Prostate gland (tissue), 2 donors: ENCODE measurements at regions of chr14 and their contacts with region 1.

Region 1: GRCh38 chr14:102316743-102317563 is 2.6 kb upstream of the ZNF839 start:
- DNase-seq: peak; percentile 93
- H3K4me3 ChIP-seq: peak overlapping the region; percentile 33 to 43
- H3K27ac ChIP-seq: peak overlapping the region; percentile 73 to 82
- H3K4me1 ChIP-seq: peaks cover 7% of the 10 kb centered on the region
- H3K27me3 ChIP-seq: no peaks in the 10 kb centered on the region
- CTCF ChIP-seq: peak; percentile 71 to 99 (median 91)
- POLR2A ChIP-seq: peak; percentile 15

Region 2: GRCh38 chr14:101964297-101965144 is 352.4 kb before region 1 on chr14 and contains the start of gene DYNC1H1:
- intact Hi-C with region 1: loop called (anchors 10 kb)
- DNase-seq: peak; percentile 91
- H3K4me3 ChIP-seq: peak within 1 kb of the TSS; percentile 95 to 97
- H3K27ac ChIP-seq: peak within 1 kb of the TSS; percentile 90 to 96
- H3K4me1 ChIP-seq: no peaks in the 10 kb centered on the region
- H3K27me3 ChIP-seq: no peaks in the 10 kb centered on the region
- CTCF ChIP-seq: no peak
- POLR2A ChIP-seq: peak; percentile 99
- total RNA-seq, gene DYNC1H1: 366 to 616 TPM

Region 3: DNA sequence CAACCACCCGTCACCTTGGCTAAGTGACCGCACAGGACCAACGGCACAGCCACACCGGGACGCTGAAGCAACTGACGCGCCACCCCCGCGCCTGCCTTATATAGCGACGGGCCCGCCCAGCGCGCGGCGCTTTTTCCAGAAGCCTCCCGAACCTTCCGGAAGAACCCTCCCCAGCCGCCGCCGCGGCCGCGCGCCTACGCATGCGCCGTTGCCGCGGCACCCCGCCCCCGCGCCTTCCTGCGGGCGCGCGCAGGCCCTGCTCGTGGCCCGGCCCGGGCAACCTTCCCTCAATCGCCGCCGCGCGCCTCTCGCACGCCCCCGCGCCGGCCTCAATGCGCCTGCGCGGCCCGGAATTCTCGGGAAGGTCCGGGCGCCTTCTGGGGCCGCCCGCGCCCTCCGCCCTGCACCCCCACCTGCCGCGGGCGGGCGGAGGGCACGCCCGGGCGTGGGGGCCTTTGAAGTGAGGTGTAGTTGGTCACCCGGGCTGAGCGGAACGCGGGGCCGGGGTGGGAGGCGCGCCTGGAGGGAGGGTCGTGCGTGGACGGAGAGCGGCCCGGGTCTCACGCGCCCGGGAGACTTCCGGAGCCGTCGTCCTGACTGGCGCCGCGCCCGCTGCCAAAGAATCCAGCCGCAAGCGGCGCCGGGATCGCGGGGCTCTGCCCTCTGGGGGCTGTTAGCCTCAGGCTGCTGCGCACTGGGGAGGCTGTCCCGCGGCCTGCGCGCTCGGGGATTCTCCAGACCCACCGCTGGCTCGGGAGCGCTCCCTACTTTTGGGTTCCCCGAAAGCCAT is 229.8 kb before region 1 on chr14 and contains the start of gene HSP90AA1:
- intact Hi-C with region 1: loop called (anchors 5 kb)
- DNase-seq: peak; percentile 90
- H3K4me3 ChIP-seq: peak within 1 kb of the TSS; percentile 98 to 100
- H3K27ac ChIP-seq: peak within 1 kb of the TSS; percentile 100
- H3K4me1 ChIP-seq: peaks cover 5% of the 10 kb centered on the region
- H3K27me3 ChIP-seq: no peaks in the 10 kb centered on the region
- CTCF ChIP-seq: peak in 1 of 4 experiments; percentile 15
- POLR2A ChIP-seq: peak; percentile 97
- total RNA-seq, gene HSP90AA1: 423 to 540 TPM

Region 4: GRCh38 chr14:102225386-102225785 is 91.6 kb before region 1 on chr14:
- intact Hi-C with region 1: no loop called
- DNase-seq: no peak
- H3K4me3 ChIP-seq: no peak overlapping the region
- H3K27ac ChIP-seq: no peak overlapping the region
- H3K4me1 ChIP-seq: no peaks in the 10 kb centered on the region
- H3K27me3 ChIP-seq: no peaks in the 10 kb centered on the region
- CTCF ChIP-seq: no peak
- POLR2A ChIP-seq: no peak

Region 5: GRCh38 chr14:102235275-102235897 is 81.6 kb before region 1 on chr14:
- intact Hi-C with region 1: loop called (anchors 1 kb)
- DNase-seq: peak; percentile 84
- H3K4me3 ChIP-seq: no peak overlapping the region
- H3K27ac ChIP-seq: no peak overlapping the region
- H3K4me1 ChIP-seq: no peaks in the 10 kb centered on the region
- H3K27me3 ChIP-seq: no peaks in the 10 kb centered on the region
- CTCF ChIP-seq: peak; percentile 54 to 84 (median 78)
- POLR2A ChIP-seq: no peak

Region 6: GRCh38 chr14:102362545-102363181 is 45.7 kb after region 1 on chr14 and contains the starts of genes CINP and TECPR2:
- intact Hi-C with region 1: loop called (anchors 5 kb)
- DNase-seq: peak; percentile 98
- H3K4me3 ChIP-seq: peak within 1 kb of the TSS; percentile 93 to 99
- H3K27ac ChIP-seq: peak within 1 kb of the TSS; percentile 88 to 89
- H3K4me1 ChIP-seq: no peaks in the 10 kb centered on the region
- H3K27me3 ChIP-seq: no peaks in the 10 kb centered on the region
- CTCF ChIP-seq: no peak
- POLR2A ChIP-seq: peak; percentile 58
- total RNA-seq, gene CINP: 36.2 to 40.8 TPM
- total RNA-seq, gene TECPR2: 12.9 to 45.0 TPM

Region 7: DNA sequence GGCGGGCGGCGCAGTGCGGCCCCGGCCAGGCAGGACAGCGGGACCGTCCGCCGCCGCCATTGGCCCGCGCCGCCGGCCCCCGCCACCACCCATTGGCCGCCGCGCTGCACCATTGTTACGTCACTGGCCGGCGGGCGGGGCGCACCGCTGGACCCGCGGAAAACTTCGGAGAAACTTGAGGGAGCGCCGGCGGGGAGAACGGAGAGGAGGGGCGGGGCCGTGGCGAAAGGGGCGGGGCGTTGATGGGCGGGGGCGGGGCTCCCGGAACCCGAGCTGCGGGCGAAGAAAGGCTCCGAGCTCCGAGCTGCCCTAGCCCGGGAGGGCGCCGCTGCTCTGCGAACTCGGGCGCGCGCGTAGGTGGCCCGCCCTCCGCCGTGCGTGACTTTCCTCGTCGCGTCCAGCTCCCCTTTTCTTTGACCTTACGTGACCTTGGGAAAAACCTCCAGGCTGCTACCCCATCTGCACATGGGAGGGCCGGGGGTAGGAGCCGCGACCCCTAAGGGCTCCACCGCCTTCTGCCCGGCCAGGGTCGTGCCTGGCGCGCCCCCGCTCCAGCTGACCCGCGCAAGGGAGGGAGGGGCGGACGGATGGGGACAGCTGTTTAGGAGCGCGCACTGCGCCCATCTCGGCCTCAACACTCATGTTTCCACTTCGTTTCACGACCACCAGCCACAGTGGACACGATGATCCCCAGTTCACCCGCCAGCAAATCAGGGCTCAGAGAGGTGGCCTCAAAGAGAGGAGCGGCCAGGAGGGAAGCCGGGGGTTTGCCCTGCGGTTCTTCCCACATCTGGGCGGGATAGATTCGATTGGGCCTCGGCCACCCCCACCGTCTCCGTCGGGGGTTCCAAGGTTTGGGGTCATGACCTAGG is 193.0 kb after region 1 on chr14 and contains the start of gene ANKRD9:
- intact Hi-C with region 1: loop called (anchors 5 kb)
- DNase-seq: peak; percentile 96
- H3K4me3 ChIP-seq: peak within 1 kb of the TSS; percentile 60 to 66
- H3K27ac ChIP-seq: peak within 1 kb of the TSS; percentile 88 to 95
- H3K4me1 ChIP-seq: peaks cover 3% of the 10 kb centered on the region
- H3K27me3 ChIP-seq: no peaks in the 10 kb centered on the region
- CTCF ChIP-seq: no peak
- POLR2A ChIP-seq: peak; percentile 81
- total RNA-seq, gene ANKRD9: 81.1 to 81.5 TPM